A673 (cell line): ENCODE measurements at regions of chr4 and their contacts with region 1.

Region 1: GRCh38 chr4:187077744-187078401 is 354.2 kb upstream of the FAT1 start:
- DNase-seq: no peak
- H3K4me3 ChIP-seq: no peak overlapping the region
- H3K27ac ChIP-seq: no peak overlapping the region
- H3K4me1 ChIP-seq: no peaks in the 10 kb centered on the region
- H3K27me3 ChIP-seq: peaks cover 91% of the 10 kb centered on the region
- CTCF ChIP-seq: no peak

Region 2: DNA sequence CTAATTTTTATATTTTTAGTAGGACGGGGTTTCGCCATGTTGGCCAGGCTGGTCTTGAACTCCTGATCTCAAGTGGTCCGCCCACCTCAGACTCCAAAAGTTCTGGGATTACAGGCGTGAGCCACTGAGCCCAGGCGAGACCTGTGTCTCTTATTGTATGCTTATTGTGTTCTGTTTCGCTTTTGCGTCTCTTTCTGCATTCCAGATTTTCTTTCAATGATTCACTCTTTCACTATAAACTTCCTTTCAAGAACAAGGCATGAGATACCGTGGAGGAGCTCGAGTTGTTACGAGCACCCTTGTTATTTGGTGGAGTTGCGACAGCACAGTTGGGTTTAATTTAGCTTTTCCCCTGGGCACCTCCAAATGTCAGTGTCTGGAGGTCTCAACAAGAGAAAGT is 12.5 kb after region 1 on chr4:
- CTCF ChIA-PET with region 1: no interaction called
- POLR2A ChIA-PET with region 1: no interaction called
- intact Hi-C with region 1: loop called (anchors 2 kb)
- DNase-seq: no peak
- H3K4me3 ChIP-seq: no peak overlapping the region
- H3K27ac ChIP-seq: no peak overlapping the region
- H3K4me1 ChIP-seq: no peaks in the 10 kb centered on the region
- H3K27me3 ChIP-seq: peaks cover 83% of the 10 kb centered on the region
- CTCF ChIP-seq: no peak

Region 3: GRCh38 chr4:187276736-187277408 is 199.0 kb after region 1 on chr4:
- CTCF ChIA-PET with region 1: no interaction called
- POLR2A ChIA-PET with region 1: no interaction called
- intact Hi-C with region 1: no loop called
- DNase-seq: no peak
- H3K4me3 ChIP-seq: no peak overlapping the region
- H3K27ac ChIP-seq: no peak overlapping the region
- H3K4me1 ChIP-seq: no peaks in the 10 kb centered on the region
- H3K27me3 ChIP-seq: peaks cover 54% of the 10 kb centered on the region
- CTCF ChIP-seq: no peak